ENCODE measurements at regions of chr12 and their contacts with region 1.

Region 1: GRCh38 chr12:121550974-121551634 is 29.7 kb downstream of the KDM2B start:
- DNase-seq: no peak
- ATAC-seq: no peak
- H3K4me3 ChIP-seq: no peak overlapping the region
- H3K4me3 Mint-ChIP-seq: no peak overlapping the region
- H3K27ac ChIP-seq: peak overlapping the region; percentile 31
- H3K27ac Mint-ChIP-seq: no peak overlapping the region
- H3K4me1 ChIP-seq: peaks cover 0 to 20% of the 10 kb centered on the region in 2 experiments
- H3K4me1 Mint-ChIP-seq: peaks cover 0 to 11% (median 8%) of the 10 kb centered on the region in 3 donors
- H3K27me3 ChIP-seq: no peaks in the 10 kb centered on the region
- H3K27me3 Mint-ChIP-seq: no peaks in the 10 kb centered on the region

Region 2: DNA sequence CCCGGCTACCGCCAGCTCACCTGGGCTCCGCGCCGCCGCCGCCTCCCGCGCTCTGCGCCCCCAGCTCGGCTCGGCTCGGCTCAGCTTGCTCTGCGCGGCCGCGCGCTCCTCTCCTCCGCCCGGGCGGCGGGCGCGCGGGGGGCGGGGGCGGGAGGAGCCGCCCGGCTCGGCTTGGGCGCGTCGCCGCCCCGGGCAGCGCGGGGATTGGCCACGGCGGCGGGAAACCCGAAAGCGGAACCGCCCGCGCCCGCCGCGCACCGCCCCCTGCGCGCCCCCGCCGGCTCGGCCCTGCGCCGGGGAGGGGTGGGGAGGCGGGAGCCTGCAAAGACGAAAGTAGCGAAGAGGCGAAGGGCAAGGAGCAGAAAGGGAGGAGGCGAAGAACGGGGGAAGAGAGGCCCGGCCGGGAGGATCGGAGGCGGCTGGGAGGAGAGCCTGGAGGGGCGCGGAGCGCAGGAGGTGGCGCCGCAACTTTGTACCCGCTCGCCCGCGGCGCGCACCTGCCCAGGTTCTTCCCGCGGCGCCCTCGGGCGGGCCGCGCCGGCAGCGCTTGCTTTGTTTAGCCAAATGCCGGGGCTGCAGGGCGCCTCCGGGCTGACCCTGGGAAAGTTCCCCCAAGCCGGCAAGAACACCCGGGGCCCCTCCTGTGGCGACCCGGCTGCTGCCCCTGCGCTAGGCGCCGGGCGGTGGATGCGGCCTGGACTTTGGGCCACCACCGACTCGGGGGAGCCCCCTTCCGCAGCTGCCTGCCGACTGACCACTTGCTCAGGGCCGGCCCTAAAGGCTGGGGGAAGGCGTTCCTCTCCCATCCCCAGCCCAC is 254.3 kb before region 1 on chr12 and contains the start of gene CAMKK2:
- CTCF ChIA-PET with region 1: no interaction called
- POLR2A ChIA-PET with region 1: interaction called in 1 of 2 experiments, 13 read pairs
- DNase-seq: peak; percentile 73 to 94 (median 84)
- ATAC-seq: peak; percentile 90 to 93 (median 90)
- H3K4me3 ChIP-seq: peak within 1 kb of the TSS; percentile 76 to 92
- H3K4me3 Mint-ChIP-seq: peak within 1 kb of the TSS; percentile 84 to 89 (median 87)
- H3K27ac ChIP-seq: no peak within 1 kb of the TSS
- H3K27ac Mint-ChIP-seq: peak within 1 kb of the TSS; percentile 61 to 85
- H3K4me1 ChIP-seq: peaks cover 10 to 32% of the 10 kb centered on the region in 2 experiments
- H3K4me1 Mint-ChIP-seq: peaks cover 13 to 24% (median 16%) of the 10 kb centered on the region in 3 donors
- H3K27me3 ChIP-seq: no peaks in the 10 kb centered on the region
- H3K27me3 Mint-ChIP-seq: no peaks in the 10 kb centered on the region
- total RNA-seq, gene CAMKK2: 13.6 to 25.5 (median 19.8) TPM

Region 3: DNA sequence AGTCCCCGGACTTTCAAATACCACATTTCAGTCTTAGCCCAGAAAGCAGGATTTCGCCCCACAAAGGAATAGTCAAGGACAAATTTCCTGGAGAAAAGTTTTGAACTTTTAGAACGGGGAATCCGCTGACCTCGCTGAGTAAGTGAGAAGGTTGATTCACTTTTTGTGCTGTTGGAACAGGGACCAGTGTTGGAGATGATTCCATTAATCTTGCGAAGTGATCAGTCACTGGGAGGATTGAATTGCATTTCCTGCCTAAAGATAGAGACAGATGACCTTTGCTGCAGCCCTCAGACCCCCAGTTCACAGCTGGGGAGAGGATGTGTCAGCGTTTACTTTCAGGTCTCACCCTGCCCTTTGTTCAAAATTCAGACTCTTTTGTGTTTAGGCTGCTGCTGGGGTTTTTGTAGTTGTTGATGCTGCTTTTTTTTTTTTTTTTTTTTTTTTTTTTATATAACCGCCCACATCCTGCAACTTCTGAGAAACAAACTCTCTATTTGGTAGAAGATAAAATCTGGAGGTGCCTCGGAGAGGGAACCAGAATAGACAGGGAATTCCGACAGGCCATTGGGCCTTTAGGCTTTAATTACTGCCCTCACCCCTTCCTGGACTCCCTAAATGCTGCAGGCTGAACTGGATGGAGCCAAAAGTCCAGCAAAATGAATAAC is 39.5 kb after region 1 on chr12:
- CTCF ChIA-PET with region 1: interaction called in 1 of 2 experiments, 6 read pairs
- POLR2A ChIA-PET with region 1: interaction called in 1 of 2 experiments, 10 read pairs
- DNase-seq: peak; percentile 30 to 86 (median 60)
- ATAC-seq: peak; percentile 75 to 83 (median 80)
- H3K4me3 ChIP-seq: peak overlapping the region; percentile 60 to 69
- H3K4me3 Mint-ChIP-seq: peak overlapping the region; percentile 77 to 84 (median 79)
- H3K27ac ChIP-seq: peak overlapping the region; percentile 100
- H3K27ac Mint-ChIP-seq: peak overlapping the region; percentile 97 to 98
- H3K4me1 ChIP-seq: peaks cover 9 to 46% of the 10 kb centered on the region in 2 experiments
- H3K4me1 Mint-ChIP-seq: peaks cover 38 to 45% (median 40%) of the 10 kb centered on the region in 3 donors
- H3K27me3 ChIP-seq: no peaks in the 10 kb centered on the region
- H3K27me3 Mint-ChIP-seq: no peaks in the 10 kb centered on the region

Region 4: GRCh38 chr12:121626087-121626852 is 75.2 kb after region 1 on chr12 and contains the start of gene ORAI1:
- CTCF ChIA-PET with region 1: interaction called, 7 to 37 read pairs
- POLR2A ChIA-PET with region 1: no interaction called
- DNase-seq: peak; percentile 84 to 98 (median 93)
- ATAC-seq: peak; percentile 77 to 87 (median 80)
- H3K4me3 ChIP-seq: peak within 1 kb of the TSS; percentile 85 to 96
- H3K4me3 Mint-ChIP-seq: peak within 1 kb of the TSS; percentile 93 to 95 (median 93)
- H3K27ac ChIP-seq: peak within 1 kb of the TSS; percentile 89
- H3K27ac Mint-ChIP-seq: peak within 1 kb of the TSS; percentile 96 to 97
- H3K4me1 ChIP-seq: peaks cover 25 to 52% of the 10 kb centered on the region in 2 experiments
- H3K4me1 Mint-ChIP-seq: peaks cover 44 to 51% (median 45%) of the 10 kb centered on the region in 3 donors
- H3K27me3 ChIP-seq: no peaks in the 10 kb centered on the region
- H3K27me3 Mint-ChIP-seq: no peaks in the 10 kb centered on the region
- total RNA-seq, gene ORAI1: 38.9 to 76.5 (median 59.0) TPM

Region 5: GRCh38 chr12:121641343-121641630 is 90.2 kb after region 1 on chr12:
- CTCF ChIA-PET with region 1: no interaction called
- POLR2A ChIA-PET with region 1: no interaction called
- DNase-seq: no peak
- ATAC-seq: no peak
- H3K4me3 ChIP-seq: no peak overlapping the region
- H3K4me3 Mint-ChIP-seq: peak overlapping the region in 1 of 3 donors; percentile 37
- H3K27ac ChIP-seq: no peak overlapping the region
- H3K27ac Mint-ChIP-seq: peak overlapping the region in 1 of 2 donors; percentile 23
- H3K4me1 ChIP-seq: peaks cover 19 to 46% of the 10 kb centered on the region in 2 experiments
- H3K4me1 Mint-ChIP-seq: peaks cover 33 to 43% (median 34%) of the 10 kb centered on the region in 3 donors
- H3K27me3 ChIP-seq: no peaks in the 10 kb centered on the region
- H3K27me3 Mint-ChIP-seq: no peaks in the 10 kb centered on the region

Region 6: GRCh38 chr12:121678716-121679580 is 127.8 kb after region 1 on chr12:
- CTCF ChIA-PET with region 1: interaction called, 5 to 25 read pairs
- POLR2A ChIA-PET with region 1: no interaction called
- DNase-seq: no peak
- ATAC-seq: no peak
- H3K4me3 ChIP-seq: no peak overlapping the region
- H3K4me3 Mint-ChIP-seq: no peak overlapping the region
- H3K27ac ChIP-seq: no peak overlapping the region
- H3K27ac Mint-ChIP-seq: no peak overlapping the region
- H3K4me1 ChIP-seq: peaks cover 0 to 10% of the 10 kb centered on the region in 2 experiments
- H3K4me1 Mint-ChIP-seq: peaks cover 4 to 11% (median 6%) of the 10 kb centered on the region in 3 donors
- H3K27me3 ChIP-seq: no peaks in the 10 kb centered on the region
- H3K27me3 Mint-ChIP-seq: no peaks in the 10 kb centered on the region

Region 7: DNA sequence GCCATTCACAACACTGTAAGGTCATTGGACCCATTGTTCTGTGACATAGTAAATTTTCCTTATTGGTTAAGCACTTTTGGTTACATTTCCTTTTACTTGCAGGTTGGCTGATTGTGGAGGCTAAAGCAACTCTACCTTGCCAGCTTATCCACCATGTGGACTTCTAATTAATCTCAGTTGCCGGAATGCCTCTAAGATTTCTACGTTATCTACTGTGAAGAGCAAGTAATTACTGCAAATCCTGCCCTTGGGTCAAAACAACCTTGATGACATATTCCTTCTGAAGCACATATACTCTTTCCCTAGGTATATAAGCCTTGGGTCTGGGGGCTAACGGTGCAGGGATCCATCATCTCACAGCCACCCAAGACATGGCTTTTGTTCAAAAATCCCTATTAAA is 137.9 kb after region 1 on chr12:
- CTCF ChIA-PET with region 1: interaction called in 1 of 2 experiments, 20 read pairs
- POLR2A ChIA-PET with region 1: no interaction called
- DNase-seq: no peak
- ATAC-seq: no peak
- H3K4me3 ChIP-seq: no peak overlapping the region
- H3K4me3 Mint-ChIP-seq: no peak overlapping the region
- H3K27ac ChIP-seq: no peak overlapping the region
- H3K27ac Mint-ChIP-seq: peak overlapping the region in 1 of 2 donors; percentile 28
- H3K4me1 ChIP-seq: peaks cover 4 to 16% of the 10 kb centered on the region in 2 experiments
- H3K4me1 Mint-ChIP-seq: peaks cover 7 to 12% (median 9%) of the 10 kb centered on the region in 3 donors
- H3K27me3 ChIP-seq: peaks cover 0 to 2% of the 10 kb centered on the region in 2 experiments
- H3K27me3 Mint-ChIP-seq: no peaks in the 10 kb centered on the region

Measured in T-cell (primary cell).